PC-9 (cell line): ENCODE measurements at regions of chr9 and their contacts with region 1.

Region 1: GRCh38 chr9:132079391-132080091 is at the start of gene MED27:
- DNase-seq: peak; percentile 79 to 80
- H3K4me3 ChIP-seq: peak within 1 kb of the TSS; percentile 82
- H3K27ac ChIP-seq: no peak within 1 kb of the TSS
- H3K4me1 ChIP-seq: peaks cover 11% of the 10 kb centered on the region; the same call in 1 of the 2 replicates
- H3K27me3 ChIP-seq: peaks cover 14% of the 10 kb centered on the region; the same call in 1 of the 2 replicates
- CTCF ChIP-seq: no peak
- total RNA-seq, gene MED27: 28.4 and 31.2 TPM in 2 replicates

Region 2: DNA sequence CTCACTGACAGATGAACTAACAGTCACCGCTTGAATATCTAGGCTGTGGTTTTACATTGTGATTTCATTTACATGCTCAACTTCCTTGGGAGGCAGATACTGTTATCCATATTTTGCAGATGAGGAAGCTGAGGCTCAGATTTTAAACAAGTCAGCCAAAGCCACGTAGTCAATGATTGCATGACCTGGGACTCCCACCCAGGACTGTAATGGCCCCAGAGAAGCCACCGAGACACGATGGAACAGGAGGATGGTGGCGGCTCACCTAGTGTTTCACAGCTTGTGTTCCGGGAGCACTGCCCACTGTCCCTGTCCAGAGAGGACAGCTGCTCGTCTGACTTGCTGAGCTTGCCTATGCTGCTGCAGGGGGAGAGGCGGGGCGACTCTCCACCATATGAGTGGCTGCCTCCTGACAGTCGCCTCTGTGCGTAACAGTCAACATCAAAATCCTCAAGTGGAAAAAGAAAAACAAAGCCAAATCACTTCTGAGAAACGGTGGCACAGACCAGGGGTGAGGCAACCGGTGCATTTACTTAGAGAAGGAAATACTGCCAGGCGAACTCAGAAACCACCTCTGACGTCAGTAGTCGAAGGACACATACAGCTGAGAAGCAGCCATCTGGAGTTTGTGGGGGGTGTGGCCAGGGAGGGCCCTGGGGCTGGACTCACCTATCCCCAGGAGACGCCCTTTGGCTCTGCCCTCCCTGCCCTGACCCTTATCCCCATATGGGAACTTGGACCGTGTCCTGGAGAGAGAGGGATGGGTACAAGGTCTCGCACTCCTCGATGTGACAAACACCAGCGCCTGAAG is 451.7 kb before region 1 on chr9:
- CTCF ChIA-PET with region 1: no interaction called
- POLR2A ChIA-PET with region 1: no interaction called
- intact Hi-C with region 1: no loop called
- DNase-seq: no peak
- H3K4me3 ChIP-seq: no peak overlapping the region
- H3K27ac ChIP-seq: no peak overlapping the region
- H3K4me1 ChIP-seq: peaks cover 12% of the 10 kb centered on the region; the same call in 1 of the 2 replicates
- H3K27me3 ChIP-seq: no peaks in the 10 kb centered on the region
- CTCF ChIP-seq: no peak

Region 3: GRCh38 chr9:131977109-131977838 is 102.3 kb before region 1 on chr9:
- CTCF ChIA-PET with region 1: no interaction called
- POLR2A ChIA-PET with region 1: no interaction called
- intact Hi-C with region 1: loop called (anchors 10 kb)
- DNase-seq: no peak
- H3K4me3 ChIP-seq: no peak overlapping the region
- H3K27ac ChIP-seq: no peak overlapping the region
- H3K4me1 ChIP-seq: no peaks in the 10 kb centered on the region
- H3K27me3 ChIP-seq: no peaks in the 10 kb centered on the region
- CTCF ChIP-seq: no peak